SK-N-SH (cell line): ENCODE measurements at regions of chr17 and their contacts with region 1.

Region 1: DNA sequence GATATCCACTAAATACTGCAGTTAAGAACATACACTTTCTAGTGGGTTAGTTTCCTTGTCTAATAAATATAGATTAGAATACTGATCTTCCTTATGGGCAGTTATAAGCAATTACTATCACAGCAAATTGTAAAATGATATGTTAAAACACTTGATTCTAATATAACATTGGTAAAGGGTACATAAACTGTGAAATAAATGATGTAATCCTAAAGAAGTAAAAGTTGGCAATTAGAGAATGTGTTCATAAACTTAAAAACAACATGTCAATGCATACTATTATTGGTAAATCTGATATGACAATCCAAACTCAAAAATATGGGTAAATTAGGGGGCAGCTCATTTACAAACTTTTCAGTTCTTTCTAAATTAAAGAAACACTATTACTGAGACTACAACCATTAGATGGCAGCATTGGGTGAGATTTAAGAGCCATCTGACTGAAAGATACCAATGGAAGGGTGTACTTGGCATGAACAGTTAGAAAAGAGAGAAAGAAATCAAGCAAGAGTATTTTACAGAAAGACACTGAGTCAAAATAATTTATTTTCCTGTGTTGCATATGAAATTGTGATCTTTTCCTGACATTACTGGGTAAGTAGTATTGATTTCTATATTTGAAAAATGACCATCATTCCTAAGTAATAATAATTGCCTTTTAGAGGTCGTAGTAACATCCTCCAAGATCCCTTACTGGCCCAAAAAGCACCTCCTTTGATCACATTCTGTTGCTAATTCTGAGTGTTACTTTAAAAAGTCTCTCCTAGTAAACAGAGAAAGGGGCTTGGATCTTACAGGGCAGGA is 119.6 kb downstream of the SPAG9 start:
- DNase-seq: peak; percentile 63
- H3K4me3 ChIP-seq: no peak overlapping the region
- H3K27ac ChIP-seq: peak overlapping the region in 1 of 2 experiments; percentile 37; a peak in 2 of 4 replicates
- H3K4me1 ChIP-seq: no peaks in the 10 kb centered on the region
- H3K27me3 ChIP-seq: no peaks in the 10 kb centered on the region
- CTCF ChIP-seq: peak; percentile 89
- EP300 ChIP-seq: no peak
- RAD21 ChIP-seq: peak; percentile 96

Region 2: GRCh38 chr17:50976951-50977472 is 24.0 kb before region 1 on chr17:
- CTCF ChIA-PET with region 1: interaction called, 13 read pairs
- POLR2A ChIA-PET with region 1: no interaction called
- DNase-seq: no peak
- H3K4me3 ChIP-seq: no peak overlapping the region
- H3K27ac ChIP-seq: peak overlapping the region in 1 of 2 experiments; percentile 26; a peak in 1 of 4 replicates
- H3K4me1 ChIP-seq: peaks cover 10 to 31% of the 10 kb centered on the region in 2 experiments; a peak in 3 of 4 replicates
- H3K27me3 ChIP-seq: no peaks in the 10 kb centered on the region
- CTCF ChIP-seq: no peak
- EP300 ChIP-seq: no peak
- RAD21 ChIP-seq: no peak

Region 3: DNA sequence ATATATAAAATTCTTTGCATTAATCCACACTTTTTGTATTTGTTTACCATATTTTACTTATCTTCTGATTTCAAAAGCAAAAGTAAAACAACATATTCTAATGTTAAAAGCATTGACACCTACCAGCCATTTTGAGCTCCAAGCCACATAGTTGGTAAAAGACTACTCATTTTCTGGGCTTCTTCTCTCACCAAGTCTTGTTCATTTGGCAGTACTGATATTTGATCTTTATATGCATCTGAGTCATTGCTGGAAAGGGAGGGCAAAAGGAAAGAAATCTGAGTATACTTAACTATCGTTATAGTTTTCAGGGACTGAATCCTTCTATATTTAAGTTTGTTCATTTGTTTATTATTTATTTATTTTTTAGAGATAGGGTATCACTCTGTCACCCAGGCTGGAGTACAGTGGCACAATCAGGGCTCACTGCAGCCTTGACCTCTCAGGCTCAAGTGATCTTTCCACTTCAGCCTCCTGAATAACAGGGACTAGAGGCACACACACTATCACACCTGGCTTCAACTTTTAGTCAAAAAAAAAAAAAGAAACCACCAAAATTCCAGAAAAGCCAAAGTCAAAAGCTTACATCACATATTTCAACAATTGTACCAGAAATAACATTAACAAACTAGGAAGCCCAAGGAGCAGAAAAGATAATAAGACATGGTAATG is 13.9 kb before region 1 on chr17:
- CTCF ChIA-PET with region 1: interaction called, 22 read pairs
- POLR2A ChIA-PET with region 1: interaction called, 5 read pairs
- DNase-seq: no peak
- H3K4me3 ChIP-seq: no peak overlapping the region
- H3K27ac ChIP-seq: peak overlapping the region; percentile 7 to 30; a peak in 3 of 4 replicates
- H3K4me1 ChIP-seq: peaks cover 0 to 10% of the 10 kb centered on the region in 2 experiments; a peak in 3 of 4 replicates
- H3K27me3 ChIP-seq: no peaks in the 10 kb centered on the region
- CTCF ChIP-seq: no peak
- EP300 ChIP-seq: no peak
- RAD21 ChIP-seq: no peak

Region 4: GRCh38 chr17:51015145-51015558 is 14.1 kb after region 1 on chr17:
- CTCF ChIA-PET with region 1: interaction called, 21 read pairs
- POLR2A ChIA-PET with region 1: no interaction called
- DNase-seq: no peak
- H3K4me3 ChIP-seq: no peak overlapping the region
- H3K27ac ChIP-seq: peak overlapping the region; percentile 50 to 64
- H3K4me1 ChIP-seq: peaks cover 7 to 16% of the 10 kb centered on the region in 2 experiments; a peak in 3 of 4 replicates
- H3K27me3 ChIP-seq: no peaks in the 10 kb centered on the region
- CTCF ChIP-seq: no peak
- EP300 ChIP-seq: no peak
- RAD21 ChIP-seq: no peak

Region 5: DNA sequence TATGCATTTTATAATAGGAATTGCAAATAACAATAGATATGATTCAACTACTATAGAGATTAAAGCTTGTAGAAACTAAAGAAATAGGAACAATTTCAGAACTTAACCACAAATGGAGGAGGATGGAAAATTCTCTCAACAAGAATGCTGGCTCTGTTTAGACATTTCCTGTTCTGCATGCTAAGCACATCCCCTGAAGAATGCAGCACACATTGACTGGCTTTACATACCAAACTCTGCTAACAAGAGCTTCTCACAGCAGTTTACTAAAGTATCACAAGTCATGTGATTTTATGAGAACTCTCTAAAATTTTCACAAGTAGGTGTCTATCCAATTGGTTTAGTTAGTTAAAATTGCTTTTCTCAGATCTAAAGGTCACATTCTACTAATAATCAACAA is 34.4 kb after region 1 on chr17:
- CTCF ChIA-PET with region 1: interaction called, 43 read pairs
- POLR2A ChIA-PET with region 1: no interaction called
- DNase-seq: no peak
- H3K4me3 ChIP-seq: no peak overlapping the region
- H3K27ac ChIP-seq: peak overlapping the region; percentile 69 to 83; a peak in 3 of 4 replicates
- H3K4me1 ChIP-seq: peaks cover 3 to 6% of the 10 kb centered on the region in 2 experiments
- H3K27me3 ChIP-seq: no peaks in the 10 kb centered on the region
- CTCF ChIP-seq: no peak
- EP300 ChIP-seq: no peak
- RAD21 ChIP-seq: no peak

Region 6: GRCh38 chr17:51046514-51047384 is 45.7 kb after region 1 on chr17:
- CTCF ChIA-PET with region 1: interaction called, 247 read pairs
- POLR2A ChIA-PET with region 1: interaction called, 3 read pairs
- DNase-seq: peak; percentile 84
- H3K4me3 ChIP-seq: peak overlapping the region; percentile 56 to 60
- H3K27ac ChIP-seq: peak overlapping the region; percentile 71 to 94
- H3K4me1 ChIP-seq: peaks cover 26 to 32% of the 10 kb centered on the region in 2 experiments
- H3K27me3 ChIP-seq: no peaks in the 10 kb centered on the region
- CTCF ChIP-seq: no peak; the same call in 1 of the 2 replicates
- EP300 ChIP-seq: peak in 1 of 2 experiments; percentile 57; a peak in 2 of 4 replicates
- RAD21 ChIP-seq: no peak

Region 7: DNA sequence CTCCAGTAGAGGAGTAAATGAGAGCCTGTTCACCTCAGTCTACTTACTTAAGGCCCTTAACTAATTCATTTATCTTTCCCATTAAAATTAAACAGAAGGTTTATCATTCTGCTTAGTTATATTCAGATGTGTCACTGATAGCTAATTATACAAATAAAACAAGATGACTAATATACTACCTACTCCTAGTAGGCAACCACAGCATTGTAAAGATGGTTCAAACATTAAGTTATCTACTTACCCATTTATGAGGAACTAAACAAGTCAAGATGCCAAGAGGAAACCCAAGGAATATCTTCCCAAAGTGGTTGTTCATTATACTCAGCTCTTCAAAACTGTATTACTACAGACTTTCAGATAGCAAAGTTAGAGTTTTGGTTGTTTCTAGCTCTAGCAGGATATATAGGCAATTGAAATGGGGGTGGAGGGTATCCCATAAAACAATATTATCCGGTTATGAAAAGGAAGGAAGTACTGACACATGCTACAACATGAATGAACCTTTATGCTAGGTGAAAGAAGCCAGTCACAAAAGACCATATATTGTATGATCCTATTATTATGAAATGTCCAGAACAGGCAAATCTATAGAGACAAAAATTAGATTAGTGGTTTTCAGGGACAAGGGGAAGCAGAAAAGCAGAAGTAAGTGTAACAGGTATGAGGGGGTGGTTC is 63.2 kb after region 1 on chr17:
- CTCF ChIA-PET with region 1: interaction called, 247 read pairs
- POLR2A ChIA-PET with region 1: no interaction called
- DNase-seq: no peak
- H3K4me3 ChIP-seq: no peak overlapping the region
- H3K27ac ChIP-seq: no peak overlapping the region
- H3K4me1 ChIP-seq: peaks cover 0 to 8% of the 10 kb centered on the region in 2 experiments; a peak in 1 of 4 replicates
- H3K27me3 ChIP-seq: no peaks in the 10 kb centered on the region
- CTCF ChIP-seq: no peak
- EP300 ChIP-seq: no peak
- RAD21 ChIP-seq: no peak